Sigmoid colon (tissue), 7 donors: ENCODE measurements at regions of chr4 and their contacts with region 1.

Region 1: GRCh38 chr4:129641179-129641578 is 545.2 kb downstream of the C4orf33 start:
- DNase-seq: peak; percentile 71
- H3K4me3 ChIP-seq: no peak overlapping the region
- H3K27ac ChIP-seq: no peak overlapping the region
- H3K4me1 ChIP-seq: no peaks in the 10 kb centered on the region
- H3K27me3 ChIP-seq: no peaks in the 10 kb centered on the region
- CTCF ChIP-seq: peak; percentile 32 to 75 (median 53)
- EP300 ChIP-seq: no peak
- POLR2A ChIP-seq: no peak

Region 2: DNA sequence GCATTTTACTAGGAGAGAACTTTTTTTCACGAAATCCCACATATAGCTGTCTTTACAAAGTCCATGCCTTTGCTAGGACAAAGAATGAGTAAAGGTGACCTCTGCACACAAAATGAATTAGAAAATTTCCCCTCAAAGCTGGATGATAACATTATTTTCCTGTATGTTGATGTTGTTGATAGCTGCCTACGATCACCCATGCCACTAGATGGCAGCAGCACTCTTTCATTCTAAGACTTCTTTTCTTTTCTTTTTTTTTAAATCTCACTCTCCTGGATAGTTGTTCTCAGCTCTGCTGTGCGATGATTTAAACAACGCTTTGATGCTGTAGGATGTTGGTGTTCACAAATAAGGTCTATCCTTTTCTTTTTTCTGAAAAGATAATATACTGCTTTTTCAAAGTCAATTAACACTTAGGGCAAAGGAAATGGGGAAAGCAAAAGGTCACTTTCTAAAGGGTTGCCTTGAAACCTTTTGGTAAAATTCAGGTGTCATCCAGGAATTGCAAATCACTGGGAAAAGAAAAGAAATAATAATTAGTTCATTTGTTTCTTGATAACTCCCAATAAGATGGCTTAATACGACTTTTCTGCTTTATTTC is 278.4 kb before region 1 on chr4:
- intact Hi-C with region 1: loop called (anchors 1 kb)
- DNase-seq: no peak
- H3K4me3 ChIP-seq: no peak overlapping the region
- H3K27ac ChIP-seq: no peak overlapping the region
- H3K4me1 ChIP-seq: peaks cover 0 to 24% (median 16%) of the 10 kb centered on the region in 4 donors
- H3K27me3 ChIP-seq: no peaks in the 10 kb centered on the region
- CTCF ChIP-seq: peak; percentile 55 to 74 (median 68)
- EP300 ChIP-seq: no peak
- POLR2A ChIP-seq: no peak

Region 3: GRCh38 chr4:129526814-129527213 is 114.4 kb before region 1 on chr4:
- intact Hi-C with region 1: loop called (anchors 2 kb)
- DNase-seq: no peak
- H3K4me3 ChIP-seq: no peak overlapping the region
- H3K27ac ChIP-seq: no peak overlapping the region
- H3K4me1 ChIP-seq: no peaks in the 10 kb centered on the region
- H3K27me3 ChIP-seq: no peaks in the 10 kb centered on the region
- CTCF ChIP-seq: peak in 1 of 4 experiments; percentile 20
- EP300 ChIP-seq: no peak
- POLR2A ChIP-seq: no peak